ENCODE measurements at regions of chr6 and their contacts with region 1.

Region 1: DNA sequence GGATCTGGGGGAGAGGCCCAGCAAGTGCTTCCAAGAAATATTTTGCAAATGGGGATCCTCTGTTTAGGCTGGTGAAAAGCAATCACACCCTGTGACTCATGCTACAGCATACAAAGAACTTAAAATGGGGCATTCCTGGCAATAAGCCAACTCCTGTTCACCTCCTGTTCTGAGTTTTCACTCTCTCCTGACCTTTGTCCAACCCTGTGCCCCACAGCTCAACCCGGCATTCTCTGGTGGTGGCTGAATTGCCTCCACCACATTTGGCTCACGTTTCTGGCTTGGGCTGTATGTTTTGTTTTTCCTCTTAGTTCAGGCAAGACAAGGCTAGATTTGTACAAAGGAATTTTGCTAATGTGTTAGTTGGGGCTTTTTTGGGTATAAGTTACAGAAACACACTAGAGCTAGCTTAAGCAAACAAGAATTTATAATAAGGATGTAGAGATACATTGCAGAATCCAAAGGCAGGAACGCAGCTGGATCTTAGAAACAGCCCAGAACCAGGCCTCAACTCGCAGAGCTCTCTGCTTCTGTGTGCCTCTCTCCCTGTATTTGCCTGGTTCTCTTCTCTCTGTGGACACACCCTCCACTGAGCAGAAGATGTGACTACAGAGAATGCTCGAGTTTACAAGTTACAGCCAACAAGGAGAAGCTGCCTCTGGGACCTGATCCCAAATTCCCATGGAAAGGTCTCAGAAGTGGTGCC is 9.4 kb downstream of the ABCC10 start:
- DNase-seq: peak; percentile 97
- ATAC-seq: peak; percentile 89
- H3K4me3 ChIP-seq: peak overlapping the region in 2 of 3 experiments; percentile 1 to 42; a peak in 3 of 6 replicates
- H3K27ac ChIP-seq: peak overlapping the region; percentile 63
- H3K4me1 ChIP-seq: peaks cover 34% of the 10 kb centered on the region
- H3K27me3 ChIP-seq: no peaks in the 10 kb centered on the region
- CTCF ChIP-seq: no peak
- EP300 ChIP-seq: peak in 1 of 2 experiments; percentile 66; a peak in 2 of 4 replicates
- POLR2A ChIP-seq: peak in 1 of 2 experiments; percentile 25; a peak in 1 of 4 replicates
- RAD21 ChIP-seq: no peak

Region 2: DNA sequence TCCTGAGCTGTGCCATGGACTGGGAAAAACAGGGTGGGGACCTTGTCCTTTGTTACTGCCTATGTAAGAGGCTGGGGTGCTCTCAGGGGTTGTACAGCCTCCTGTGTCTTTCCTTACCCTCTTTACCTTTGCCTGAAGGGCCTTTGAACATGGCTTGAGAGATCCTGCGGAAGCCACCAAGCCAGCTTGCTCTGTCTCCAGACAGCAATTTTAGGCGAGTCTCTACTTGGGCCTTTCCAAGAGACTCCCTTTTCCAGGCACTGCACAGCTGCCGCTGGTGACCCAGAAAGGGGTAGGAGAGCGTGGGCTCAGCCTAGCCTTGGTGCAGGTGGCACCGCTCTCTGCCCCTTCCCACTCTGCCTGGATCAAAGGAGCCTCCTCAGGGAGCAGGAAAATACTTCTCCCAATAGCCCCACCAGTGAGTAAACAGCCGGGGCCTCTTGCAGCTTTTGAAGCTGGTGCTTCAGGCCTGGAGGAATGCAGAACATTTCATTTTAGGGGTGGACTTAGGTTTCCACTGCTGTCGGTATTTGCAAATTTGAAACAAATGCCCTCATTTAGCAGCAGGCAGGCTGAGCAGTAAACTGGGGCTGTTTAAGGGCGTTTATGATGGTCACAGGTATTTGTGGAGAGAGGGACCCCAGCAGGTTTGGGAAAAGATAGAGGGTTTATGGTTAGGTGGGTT is 346.7 kb before region 1 on chr6:
- CTCF ChIA-PET with region 1: no interaction called
- POLR2A ChIA-PET with region 1: no interaction called
- in situ Hi-C with region 1: no loop called
- intact Hi-C with region 1: no loop called
- DNase-seq: peak; percentile 95
- ATAC-seq: peak; percentile 84
- H3K4me3 ChIP-seq: peak overlapping the region; percentile 57 to 74 (median 57)
- H3K27ac ChIP-seq: peak overlapping the region; percentile 92
- H3K4me1 ChIP-seq: peaks cover 85% of the 10 kb centered on the region
- H3K27me3 ChIP-seq: no peaks in the 10 kb centered on the region
- CTCF ChIP-seq: no peak
- EP300 ChIP-seq: peak; percentile 88 to 96; a peak in 3 of 4 replicates
- POLR2A ChIP-seq: peak in 1 of 2 experiments; percentile 73; a peak in 2 of 4 replicates
- RAD21 ChIP-seq: no peak; the same call in 1 of the 2 replicates

Region 3: GRCh38 chr6:43454696-43455530 is 18.2 kb after region 1 on chr6:
- CTCF ChIA-PET with region 1: no interaction called
- POLR2A ChIA-PET with region 1: interaction called, 17 read pairs
- in situ Hi-C with region 1: no loop called
- intact Hi-C with region 1: no loop called
- DNase-seq: peak; percentile 67
- ATAC-seq: peak; percentile 87
- H3K4me3 ChIP-seq: peak overlapping the region; percentile 54 to 76 (median 66); a peak in 5 of 6 replicates
- H3K27ac ChIP-seq: no peak overlapping the region
- H3K4me1 ChIP-seq: peaks cover 26% of the 10 kb centered on the region
- H3K27me3 ChIP-seq: peaks cover 0 to 5% of the 10 kb centered on the region in 2 experiments; a peak in 3 of 5 replicates
- CTCF ChIP-seq: no peak; the same call in none of the 2 replicates
- EP300 ChIP-seq: no peak
- POLR2A ChIP-seq: peak in 1 of 2 experiments; percentile 33; a peak in 1 of 4 replicates
- RAD21 ChIP-seq: peak; percentile 33

Region 4: GRCh38 chr6:43477235-43478007 is 40.7 kb after region 1 on chr6 and contains the start of gene TJAP1:
- CTCF ChIA-PET with region 1: no interaction called
- POLR2A ChIA-PET with region 1: interaction called, 13 read pairs
- in situ Hi-C with region 1: no loop called
- intact Hi-C with region 1: no loop called
- DNase-seq: peak; percentile 80
- ATAC-seq: peak; percentile 99
- H3K4me3 ChIP-seq: peak within 1 kb of the TSS; percentile 78 to 97 (median 81)
- H3K27ac ChIP-seq: peak within 1 kb of the TSS; percentile 62
- H3K4me1 ChIP-seq: peaks cover 53% of the 10 kb centered on the region
- H3K27me3 ChIP-seq: no peaks in the 10 kb centered on the region; a peak in 1 of 5 replicates
- CTCF ChIP-seq: 0 out of 2 replicates have a peak, but pooled peaks have one; percentile 21
- EP300 ChIP-seq: peak in 1 of 2 experiments; percentile 46; a peak in 1 of 4 replicates
- POLR2A ChIP-seq: peak; percentile 75 to 88
- RAD21 ChIP-seq: no peak
- total RNA-seq, gene TJAP1: 10.2 and 15.7 TPM in 2 replicates

Region 5: DNA sequence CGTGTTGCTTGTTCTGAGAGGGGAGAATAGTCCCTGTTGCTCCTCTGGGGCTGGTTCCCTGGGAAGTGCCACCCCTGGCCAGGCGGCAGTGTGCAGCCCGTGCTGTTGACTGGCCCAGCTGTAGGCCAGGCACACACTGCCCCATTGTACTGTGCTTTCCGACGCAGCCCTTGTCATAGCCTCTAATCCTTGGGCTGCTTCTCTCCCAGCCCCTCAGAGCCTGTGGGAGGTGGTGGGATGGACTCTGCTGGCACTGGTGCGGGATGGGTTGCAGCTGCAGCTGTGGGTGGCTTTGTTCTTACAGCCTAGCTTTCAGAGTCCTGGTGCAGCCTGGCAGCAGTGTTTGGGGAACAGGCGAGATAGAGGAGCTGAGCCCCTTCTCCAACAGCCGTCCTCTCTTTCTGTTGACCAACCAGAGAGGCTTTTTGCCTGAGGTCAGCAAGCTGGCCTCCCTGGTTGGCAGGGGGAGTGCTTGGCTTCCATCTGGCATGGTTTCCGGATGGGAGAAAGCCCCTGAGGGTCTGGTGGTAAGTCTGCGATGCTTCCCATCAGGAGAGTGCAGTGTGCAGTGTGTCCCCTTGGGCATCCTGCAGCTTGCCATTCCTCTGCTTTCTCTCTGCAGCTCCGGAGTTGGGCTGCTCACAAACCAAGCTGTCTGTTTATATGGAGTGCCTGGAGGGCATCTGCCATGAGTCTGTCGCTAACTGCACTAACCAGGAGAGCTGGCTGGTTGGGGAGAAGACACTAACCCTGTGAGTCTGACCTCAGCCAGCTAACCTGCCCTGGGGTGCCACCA is 52.7 kb after region 1 on chr6:
- CTCF ChIA-PET with region 1: no interaction called
- POLR2A ChIA-PET with region 1: interaction called, 16 read pairs
- in situ Hi-C with region 1: no loop called
- intact Hi-C with region 1: loop called (anchors 10 kb)
- DNase-seq: peak; percentile 64
- ATAC-seq: peak; percentile 59
- H3K4me3 ChIP-seq: no peak overlapping the region; a peak in 2 of 6 replicates
- H3K27ac ChIP-seq: no peak overlapping the region
- H3K4me1 ChIP-seq: no peaks in the 10 kb centered on the region
- H3K27me3 ChIP-seq: no peaks in the 10 kb centered on the region
- CTCF ChIP-seq: no peak
- EP300 ChIP-seq: no peak
- POLR2A ChIP-seq: no peak
- RAD21 ChIP-seq: no peak

Region 6: GRCh38 chr6:43506667-43507471 is 70.1 kb after region 1 on chr6:
- CTCF ChIA-PET with region 1: no interaction called
- POLR2A ChIA-PET with region 1: interaction called, 13 read pairs
- in situ Hi-C with region 1: no loop called
- intact Hi-C with region 1: no loop called
- DNase-seq: peak; percentile 76
- ATAC-seq: peak; percentile 71
- H3K4me3 ChIP-seq: no peak overlapping the region; a peak in 1 of 6 replicates
- H3K27ac ChIP-seq: no peak overlapping the region
- H3K4me1 ChIP-seq: peaks cover 47% of the 10 kb centered on the region
- H3K27me3 ChIP-seq: peaks cover 3 to 7% of the 10 kb centered on the region in 2 experiments; a peak in 4 of 5 replicates
- CTCF ChIP-seq: peak; percentile 98
- EP300 ChIP-seq: no peak
- POLR2A ChIP-seq: no peak
- RAD21 ChIP-seq: peak; percentile 92

Region 7: DNA sequence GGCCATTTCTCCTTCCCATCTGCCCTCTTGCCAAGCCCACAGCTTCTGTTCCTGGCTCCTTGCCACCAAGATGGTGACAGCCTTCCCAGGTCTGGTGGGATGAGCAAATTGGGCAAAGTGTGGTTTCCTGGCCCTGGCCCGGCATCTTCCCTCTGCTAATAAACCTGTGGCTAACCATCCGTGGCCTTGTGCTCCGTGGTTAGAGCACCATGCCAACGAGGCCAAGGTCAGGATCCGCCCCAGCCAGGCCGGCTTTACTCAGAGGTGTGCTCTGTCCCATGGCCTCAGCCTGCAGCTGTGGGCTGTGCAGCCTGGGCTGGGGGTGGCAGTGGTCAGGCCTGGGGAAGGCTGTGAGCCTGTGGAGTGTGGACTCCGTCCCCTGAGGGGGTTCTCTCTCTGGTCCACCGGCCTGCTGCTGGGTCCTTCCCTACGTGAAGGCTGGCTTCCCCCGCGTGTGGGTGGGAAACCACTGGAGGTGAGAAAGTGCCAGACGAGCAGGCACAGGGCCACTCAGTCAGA is 450.7 kb after region 1 on chr6:
- CTCF ChIA-PET with region 1: no interaction called
- POLR2A ChIA-PET with region 1: no interaction called
- in situ Hi-C with region 1: no loop called
- intact Hi-C with region 1: no loop called
- DNase-seq: no peak
- ATAC-seq: peak; percentile 79
- H3K4me3 ChIP-seq: no peak overlapping the region
- H3K27ac ChIP-seq: no peak overlapping the region
- H3K4me1 ChIP-seq: peaks cover 61% of the 10 kb centered on the region
- H3K27me3 ChIP-seq: peaks cover 9 to 13% of the 10 kb centered on the region in 2 experiments; a peak in 4 of 5 replicates
- CTCF ChIP-seq: peak; percentile 35; the same call in 1 of the 2 replicates
- EP300 ChIP-seq: no peak; a peak in 1 of 4 replicates
- POLR2A ChIP-seq: no peak
- RAD21 ChIP-seq: no peak